ENCODE measurements at regions of chr6 and their contacts with region 1.

Region 1: DNA sequence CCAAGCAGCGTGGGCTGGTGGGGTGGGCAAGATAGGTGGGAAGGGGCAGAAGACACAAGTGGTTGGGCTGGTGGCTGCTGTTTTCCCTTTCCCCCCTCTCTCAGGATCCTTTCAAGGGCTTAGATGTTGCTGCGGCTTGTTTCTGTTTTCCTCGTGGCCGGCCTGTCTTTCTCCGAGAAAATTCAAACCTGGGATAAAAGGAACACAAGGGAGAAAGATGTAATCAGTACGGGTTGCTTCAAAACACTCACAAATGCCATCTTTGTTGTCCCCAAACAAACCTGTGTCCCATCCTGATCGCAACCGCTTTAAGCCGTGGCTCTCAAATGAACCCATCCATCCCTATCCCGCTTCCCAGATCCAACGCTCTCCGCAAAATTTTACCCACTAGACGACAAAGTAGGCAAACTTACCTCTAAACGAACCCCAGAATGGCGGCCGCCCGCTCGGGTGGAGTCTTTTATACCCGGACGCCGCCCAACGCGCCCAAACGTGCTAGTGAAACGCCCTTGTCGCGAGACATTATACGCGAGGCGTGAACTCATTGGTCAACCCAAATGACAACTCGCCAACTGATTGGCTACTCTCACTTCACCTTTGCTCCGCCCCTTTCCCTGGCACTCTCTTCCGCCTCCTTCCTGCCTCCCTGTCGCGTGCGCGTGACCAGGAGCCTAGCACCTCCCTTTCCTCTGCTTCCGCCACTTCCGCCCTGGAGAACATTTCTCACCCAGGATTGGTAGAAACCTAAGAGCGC is at the start of gene PPP1R10:
- DNase-seq: peak; percentile 99
- ATAC-seq: peak; percentile 77
- H3K4me3 Mint-ChIP-seq: peak within 1 kb of the TSS; percentile 97
- H3K27ac Mint-ChIP-seq: peak within 1 kb of the TSS; percentile 98
- H3K4me1 Mint-ChIP-seq: peaks cover 40% of the 10 kb centered on the region
- H3K27me3 Mint-ChIP-seq: no peaks in the 10 kb centered on the region
- total RNA-seq, gene PPP1R10: 75.6 to 100.0 TPM

Region 2: GRCh38 chr6:30489081-30490025 is 127.6 kb before region 1 on chr6 and contains the start of gene HLA-E:
- CTCF ChIA-PET with region 1: interaction called, 15 read pairs
- POLR2A ChIA-PET with region 1: interaction called, 4 read pairs
- intact Hi-C with region 1: loop called (anchors 1 kb)
- DNase-seq: peak; percentile 92
- ATAC-seq: peak; percentile 78
- H3K4me3 Mint-ChIP-seq: peak within 1 kb of the TSS; percentile 95
- H3K27ac Mint-ChIP-seq: peak within 1 kb of the TSS; percentile 98
- H3K4me1 Mint-ChIP-seq: peaks cover 43% of the 10 kb centered on the region
- H3K27me3 Mint-ChIP-seq: no peaks in the 10 kb centered on the region
- total RNA-seq, gene HLA-E: 451 to 502 TPM

Region 3: GRCh38 chr6:30590994-30591393 is 26.0 kb before region 1 on chr6:
- CTCF ChIA-PET with region 1: interaction called, 6 read pairs
- POLR2A ChIA-PET with region 1: interaction called, 13 read pairs
- intact Hi-C with region 1: loop called in 1 of 2 experiments (anchors 2 kb)
- DNase-seq: no peak
- ATAC-seq: no peak
- H3K4me3 Mint-ChIP-seq: no peak overlapping the region
- H3K27ac Mint-ChIP-seq: peak overlapping the region; percentile 59
- H3K4me1 Mint-ChIP-seq: no peaks in the 10 kb centered on the region
- H3K27me3 Mint-ChIP-seq: no peaks in the 10 kb centered on the region

Region 4: DNA sequence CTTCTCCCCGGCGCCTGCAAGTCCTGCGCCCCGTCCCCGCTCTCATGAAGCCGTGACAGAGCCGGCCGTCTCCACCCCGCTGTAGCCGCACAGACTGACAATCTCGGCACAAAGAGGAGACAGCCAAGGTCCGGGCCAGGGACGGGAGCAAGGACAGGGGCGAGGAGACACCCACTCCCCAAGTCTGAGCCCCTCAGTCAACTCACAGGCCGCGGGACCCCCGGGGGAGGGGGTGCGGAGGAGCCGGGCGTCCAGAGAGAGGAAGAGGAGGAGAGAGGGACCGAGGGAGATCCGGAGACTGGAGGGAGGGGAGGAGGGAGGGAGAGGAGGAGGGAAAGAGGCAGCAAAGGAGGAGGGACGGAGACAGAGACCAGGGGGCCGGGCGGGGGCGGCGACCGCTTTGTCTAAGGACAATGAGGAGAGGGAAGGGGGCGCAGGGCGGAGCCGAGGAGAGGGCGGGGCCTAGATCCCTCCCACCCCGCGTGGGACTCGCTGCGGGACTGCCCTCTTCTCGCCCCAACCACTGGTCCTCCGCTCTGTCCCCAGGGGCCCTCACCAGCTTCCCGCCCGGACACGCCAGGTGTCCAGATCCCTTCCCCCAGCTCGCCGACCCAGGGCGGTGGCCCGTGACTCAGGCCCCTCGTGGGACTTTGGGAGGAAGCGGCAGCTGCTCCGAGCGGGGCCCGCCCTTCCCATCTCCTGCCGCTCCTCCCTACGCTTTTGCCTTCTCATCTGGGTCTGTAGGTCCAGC is 70.1 kb after region 1 on chr6:
- CTCF ChIA-PET with region 1: interaction called, 3 read pairs
- POLR2A ChIA-PET with region 1: interaction called, 3 read pairs
- intact Hi-C with region 1: loop called (anchors 1 kb)
- DNase-seq: peak; percentile 90
- ATAC-seq: peak; percentile 20
- H3K4me3 Mint-ChIP-seq: peak overlapping the region; percentile 100
- H3K27ac Mint-ChIP-seq: peak overlapping the region; percentile 89
- H3K4me1 Mint-ChIP-seq: peaks cover 42% of the 10 kb centered on the region
- H3K27me3 Mint-ChIP-seq: no peaks in the 10 kb centered on the region

Region 5: DNA sequence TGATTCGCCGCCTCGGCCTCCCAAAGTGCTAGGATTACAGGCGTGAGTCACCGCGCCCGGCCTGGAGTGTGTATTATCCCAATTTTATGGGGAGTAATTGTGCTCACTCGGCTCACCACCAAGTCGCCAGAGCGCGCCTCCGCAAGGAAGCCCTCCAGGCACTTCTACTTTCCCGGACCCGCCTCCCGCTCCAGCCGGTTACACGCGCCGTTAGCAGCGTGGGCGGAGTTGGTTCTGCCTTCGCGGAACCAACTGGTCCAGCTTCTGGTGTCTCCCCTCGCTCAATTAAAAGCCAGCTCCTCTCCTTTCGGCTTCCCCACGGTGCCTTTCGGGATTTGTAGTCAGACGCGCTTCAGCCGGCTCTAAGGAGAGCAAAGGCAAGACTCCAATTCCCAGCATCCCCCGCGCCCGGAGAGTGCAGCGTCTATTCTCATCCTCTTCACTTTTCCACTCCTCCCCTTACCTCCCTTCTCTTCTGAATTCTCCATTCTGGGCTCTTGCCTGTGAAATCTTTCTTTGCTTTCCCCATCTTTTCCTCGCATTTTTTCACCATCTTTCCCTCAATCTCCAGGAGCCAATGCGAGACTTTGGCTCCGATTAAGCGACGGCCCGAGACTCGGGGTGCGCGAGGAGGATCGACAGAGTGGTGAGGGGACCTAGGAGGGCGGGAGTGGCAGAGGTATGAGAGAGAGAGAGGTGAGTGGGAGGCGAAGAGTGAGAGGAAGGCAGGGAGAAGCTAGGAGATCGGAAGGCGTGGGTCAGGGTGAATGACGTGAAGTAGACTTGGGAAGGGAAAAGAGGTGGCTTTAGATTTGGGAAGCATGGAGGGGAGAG is 291.0 kb after region 1 on chr6 and contains the start of gene GTF2H4:
- CTCF ChIA-PET with region 1: interaction called, 4 read pairs
- POLR2A ChIA-PET with region 1: interaction called, 7 read pairs
- intact Hi-C with region 1: loop called in 1 of 2 experiments (anchors 5 kb)
- DNase-seq: peak; percentile 96
- ATAC-seq: peak; percentile 99
- H3K4me3 Mint-ChIP-seq: peak within 1 kb of the TSS; percentile 95
- H3K27ac Mint-ChIP-seq: peak within 1 kb of the TSS; percentile 86
- H3K4me1 Mint-ChIP-seq: peaks cover 17% of the 10 kb centered on the region
- H3K27me3 Mint-ChIP-seq: no peaks in the 10 kb centered on the region
- total RNA-seq, gene GTF2H4: 35.9 to 40.9 TPM

Region 6: DNA sequence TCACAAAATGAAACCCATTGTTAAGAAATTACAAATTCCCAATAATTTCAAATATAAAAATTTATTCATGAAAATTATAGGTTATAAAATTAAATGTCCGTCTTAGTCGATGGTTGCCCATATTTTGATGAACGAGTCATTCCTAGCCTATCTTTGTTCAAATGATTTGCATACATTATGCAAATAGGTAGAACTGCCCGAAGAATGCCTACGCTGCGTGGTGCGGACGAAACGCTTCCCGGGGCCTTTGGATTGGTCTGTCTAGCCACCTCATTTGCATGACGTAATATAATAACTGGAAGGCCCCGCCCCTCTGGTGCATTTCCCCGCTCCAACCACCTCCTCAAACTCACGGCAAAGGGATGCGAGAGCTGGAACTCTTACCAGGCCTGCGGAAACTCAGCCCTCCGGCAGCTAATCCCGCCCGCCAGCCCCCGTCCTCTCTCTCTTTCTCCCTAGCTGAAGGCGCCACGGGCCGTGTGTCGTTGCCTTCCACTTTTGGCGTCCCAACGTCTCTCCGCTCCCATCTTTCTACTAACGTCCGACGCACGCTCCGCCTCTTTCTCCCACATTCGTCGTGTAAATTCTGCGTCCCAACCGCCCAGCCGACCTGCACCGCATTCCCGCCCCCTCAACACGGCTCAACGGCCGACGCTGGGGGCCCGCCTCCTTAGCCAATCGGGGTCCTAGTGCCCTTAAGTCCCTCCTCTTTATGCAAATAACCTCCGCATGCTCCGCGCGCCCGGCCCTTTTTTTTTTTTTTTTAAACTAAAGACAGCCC is 1003.0 kb after region 1 on chr6:
- CTCF ChIA-PET with region 1: no interaction called
- POLR2A ChIA-PET with region 1: no interaction called
- intact Hi-C with region 1: loop called in 1 of 2 experiments (anchors 2 kb)
- DNase-seq: peak; percentile 98
- ATAC-seq: peak; percentile 82
- H3K4me3 Mint-ChIP-seq: peak overlapping the region; percentile 95
- H3K27ac Mint-ChIP-seq: peak overlapping the region; percentile 97
- H3K4me1 Mint-ChIP-seq: peaks cover 52% of the 10 kb centered on the region
- H3K27me3 Mint-ChIP-seq: no peaks in the 10 kb centered on the region